PC-9 (cell line): ENCODE measurements at regions of chr1 and their contacts with region 1.

Region 1: GRCh38 chr1:56782773-56783172 is 36.4 kb downstream of the FYB2 start:
- DNase-seq: no peak
- H3K4me3 ChIP-seq: no peak overlapping the region
- H3K27ac ChIP-seq: no peak overlapping the region
- H3K4me1 ChIP-seq: peaks cover 6% of the 10 kb centered on the region; the same call in 1 of the 2 replicates
- H3K27me3 ChIP-seq: no peaks in the 10 kb centered on the region
- CTCF ChIP-seq: no peak

Region 2: DNA sequence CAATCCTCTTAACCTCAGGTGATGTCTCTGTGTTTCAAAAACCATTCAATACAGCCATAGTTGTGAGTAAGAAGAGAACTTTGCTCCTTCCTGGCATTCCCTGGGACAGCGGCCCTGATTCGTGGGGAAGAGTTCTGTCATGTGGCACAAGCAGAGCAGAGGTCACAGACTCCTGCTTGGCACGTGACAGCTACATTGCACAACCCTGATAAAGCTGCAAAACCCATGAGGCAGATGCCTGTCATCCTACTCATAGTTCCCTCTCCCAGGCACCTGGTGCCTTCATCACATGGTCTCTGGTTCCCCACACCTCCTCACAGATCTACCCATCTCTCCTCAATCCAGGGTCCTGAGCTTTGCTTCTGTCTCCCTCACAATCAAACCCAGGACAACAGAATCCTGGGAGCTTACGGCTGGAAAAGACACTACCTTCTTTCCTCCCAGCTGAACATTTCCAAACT is 274.2 kb before region 1 on chr1:
- CTCF ChIA-PET with region 1: no interaction called
- POLR2A ChIA-PET with region 1: interaction called, 10 read pairs
- intact Hi-C with region 1: no loop called
- DNase-seq: peak; percentile 10 to 46
- H3K4me3 ChIP-seq: no peak overlapping the region
- H3K27ac ChIP-seq: 0 out of 2 replicates have a peak overlapping the region, but pooled peaks have one; percentile 15
- H3K4me1 ChIP-seq: peaks cover 9% of the 10 kb centered on the region; the same call in 1 of the 2 replicates
- H3K27me3 ChIP-seq: no peaks in the 10 kb centered on the region
- CTCF ChIP-seq: no peak

Region 3: GRCh38 chr1:56639210-56639609 is 143.6 kb before region 1 on chr1:
- CTCF ChIA-PET with region 1: no interaction called
- POLR2A ChIA-PET with region 1: no interaction called
- intact Hi-C with region 1: no loop called
- DNase-seq: no peak
- H3K4me3 ChIP-seq: no peak overlapping the region
- H3K27ac ChIP-seq: no peak overlapping the region
- H3K4me1 ChIP-seq: peaks cover 12% of the 10 kb centered on the region
- H3K27me3 ChIP-seq: no peaks in the 10 kb centered on the region
- CTCF ChIP-seq: no peak